Psoas muscle (tissue), 8 donors: ENCODE measurements at regions of chr5 and their contacts with region 1.

Region 1: DNA sequence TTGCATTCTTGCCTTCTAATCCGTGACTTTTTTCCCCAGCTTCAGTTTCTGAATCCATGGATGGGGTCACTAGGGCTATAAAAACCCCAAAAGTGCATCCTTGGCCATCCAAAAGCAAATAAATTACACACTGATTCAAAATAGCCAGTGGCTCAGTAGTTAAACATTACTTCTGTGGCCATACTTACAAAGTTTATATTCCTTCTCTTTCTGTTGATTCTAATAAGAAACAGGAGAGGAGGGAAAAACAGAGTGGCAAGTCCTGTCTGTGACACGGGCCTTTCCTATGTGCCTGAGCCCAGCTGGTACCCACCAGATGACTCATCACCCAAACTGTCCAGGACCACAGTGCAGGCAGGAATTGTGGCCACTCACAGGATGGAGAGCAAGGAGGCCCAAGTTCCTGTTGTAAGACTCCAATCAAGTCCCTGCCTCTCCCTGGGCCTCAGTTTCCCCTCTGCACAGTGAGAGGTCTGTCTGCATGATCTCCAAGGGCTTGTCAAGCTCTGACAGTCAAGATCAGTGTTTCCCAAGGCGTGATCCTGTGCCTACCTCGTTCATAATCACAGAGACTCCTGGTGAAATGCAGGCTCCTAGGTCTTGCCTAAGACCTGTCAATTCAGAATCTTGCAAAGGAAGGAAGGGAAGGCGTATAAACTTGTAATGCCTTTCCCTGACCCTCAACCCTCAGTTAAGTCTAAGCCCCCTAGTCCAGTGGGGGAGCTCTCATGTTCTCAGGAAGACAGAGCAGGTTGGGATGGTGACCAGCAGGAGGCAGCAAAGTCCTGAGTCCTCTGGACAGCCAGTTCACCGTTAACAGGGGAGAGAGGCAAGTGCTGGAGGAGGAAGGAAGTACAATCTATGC is 29.5 kb downstream of the TNIP1 start:
- DNase-seq: peak; percentile 82 to 91
- ATAC-seq: peak; percentile 88 to 91 (median 90)
- H3K4me3 ChIP-seq: no peak overlapping the region
- H3K27ac ChIP-seq: peak overlapping the region; percentile 63
- H3K4me1 ChIP-seq: peaks cover 16% of the 10 kb centered on the region
- H3K27me3 ChIP-seq: no peaks in the 10 kb centered on the region
- CTCF ChIP-seq: peak; percentile 88

Region 2: DNA sequence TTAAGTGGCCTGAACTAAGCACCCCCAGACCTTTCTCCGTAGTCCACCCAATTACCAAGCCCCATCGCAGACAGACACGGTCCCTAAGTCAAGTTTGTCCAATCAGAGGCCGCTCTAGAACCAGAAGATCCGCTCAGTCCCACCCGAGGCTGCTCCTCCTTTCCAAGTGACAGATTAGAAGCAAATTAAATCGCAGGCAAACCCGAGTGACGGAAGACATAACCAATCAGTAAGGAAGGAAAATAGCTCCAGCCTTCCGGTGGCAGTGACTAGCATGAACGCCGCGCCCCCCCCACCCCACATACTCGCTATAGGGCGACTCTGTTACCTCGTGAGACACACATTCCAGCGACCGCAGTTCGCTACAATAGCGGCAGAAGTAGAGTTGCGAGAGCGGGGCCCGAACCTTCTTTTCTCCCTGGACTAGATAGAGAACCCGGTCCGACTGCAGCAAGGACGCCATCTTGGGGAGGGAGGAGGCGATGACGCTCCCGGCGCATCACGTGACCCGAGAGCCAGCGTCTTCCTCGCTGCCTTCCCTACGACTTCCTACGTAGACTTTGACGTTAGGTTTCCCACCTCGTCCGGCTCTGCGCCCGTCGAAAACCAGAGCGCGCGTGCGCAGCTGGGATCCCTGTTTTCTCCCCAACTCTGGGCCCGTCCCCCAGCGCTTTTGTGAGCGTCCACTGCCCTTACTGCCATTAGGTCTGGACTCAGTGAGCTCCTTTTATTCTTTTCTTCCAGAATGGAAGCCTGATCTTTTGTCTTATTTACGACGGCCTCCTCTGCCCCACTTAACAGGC is 292.6 kb before region 1 on chr5 and contains the start of gene DCTN4:
- intact Hi-C with region 1: no loop called
- DNase-seq: peak; percentile 96 to 98
- ATAC-seq: peak; percentile 94 to 96 (median 94)
- H3K4me3 ChIP-seq: peak within 1 kb of the TSS; percentile 77
- H3K27ac ChIP-seq: peak within 1 kb of the TSS; percentile 94
- H3K4me1 ChIP-seq: peaks cover 15% of the 10 kb centered on the region
- H3K27me3 ChIP-seq: no peaks in the 10 kb centered on the region
- CTCF ChIP-seq: no peak
- total RNA-seq, gene DCTN4: 50.9 to 81.5 (median 70.6) TPM

Region 3: GRCh38 chr5:151002250-151002649 is 49.0 kb before region 1 on chr5:
- intact Hi-C with region 1: loop called (anchors 2 kb)
- DNase-seq: no peak
- ATAC-seq: peak in 3 of 4 donors; percentile 56 to 67 (median 61)
- H3K4me3 ChIP-seq: no peak overlapping the region
- H3K27ac ChIP-seq: no peak overlapping the region
- H3K4me1 ChIP-seq: peaks cover 25% of the 10 kb centered on the region
- H3K27me3 ChIP-seq: no peaks in the 10 kb centered on the region
- CTCF ChIP-seq: peak; percentile 64

Region 4: DNA sequence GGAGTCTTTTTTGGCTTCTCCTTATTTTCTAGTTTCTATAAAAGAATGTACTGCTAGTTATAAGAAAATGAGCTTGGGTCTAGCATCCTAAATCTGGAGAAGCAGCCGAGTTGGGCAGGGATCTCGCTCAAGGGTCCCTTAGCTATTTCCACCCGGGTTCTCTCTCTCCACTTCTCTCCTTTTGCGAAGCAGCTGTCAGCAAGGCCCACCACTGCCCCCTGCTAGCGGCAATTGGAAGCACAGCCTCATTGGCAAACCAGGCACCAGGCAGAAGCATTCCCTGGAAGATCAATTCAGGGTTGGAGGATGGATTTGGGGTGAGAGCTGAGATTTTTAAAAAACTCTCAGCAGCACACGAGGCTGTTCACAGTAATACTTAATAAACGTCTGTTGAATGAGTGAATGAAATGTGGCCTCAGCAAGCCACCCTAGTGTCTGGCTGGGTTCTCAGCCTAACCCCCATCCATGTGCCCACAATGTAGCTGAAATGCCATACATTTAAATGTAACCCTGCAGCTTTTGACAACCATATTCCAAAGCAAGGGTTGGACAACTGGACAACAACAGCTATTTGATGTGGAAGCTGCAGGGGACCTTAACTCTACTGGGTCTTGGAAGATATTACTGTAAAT is 64.1 kb after region 1 on chr5:
- intact Hi-C with region 1: loop called (anchors 1 to 2 kb)
- DNase-seq: peak; percentile 75 to 88
- ATAC-seq: peak; percentile 79 to 86 (median 82)
- H3K4me3 ChIP-seq: no peak overlapping the region
- H3K27ac ChIP-seq: peak overlapping the region; percentile 51
- H3K4me1 ChIP-seq: peaks cover 20% of the 10 kb centered on the region
- H3K27me3 ChIP-seq: no peaks in the 10 kb centered on the region
- CTCF ChIP-seq: peak; percentile 97

Region 5: DNA sequence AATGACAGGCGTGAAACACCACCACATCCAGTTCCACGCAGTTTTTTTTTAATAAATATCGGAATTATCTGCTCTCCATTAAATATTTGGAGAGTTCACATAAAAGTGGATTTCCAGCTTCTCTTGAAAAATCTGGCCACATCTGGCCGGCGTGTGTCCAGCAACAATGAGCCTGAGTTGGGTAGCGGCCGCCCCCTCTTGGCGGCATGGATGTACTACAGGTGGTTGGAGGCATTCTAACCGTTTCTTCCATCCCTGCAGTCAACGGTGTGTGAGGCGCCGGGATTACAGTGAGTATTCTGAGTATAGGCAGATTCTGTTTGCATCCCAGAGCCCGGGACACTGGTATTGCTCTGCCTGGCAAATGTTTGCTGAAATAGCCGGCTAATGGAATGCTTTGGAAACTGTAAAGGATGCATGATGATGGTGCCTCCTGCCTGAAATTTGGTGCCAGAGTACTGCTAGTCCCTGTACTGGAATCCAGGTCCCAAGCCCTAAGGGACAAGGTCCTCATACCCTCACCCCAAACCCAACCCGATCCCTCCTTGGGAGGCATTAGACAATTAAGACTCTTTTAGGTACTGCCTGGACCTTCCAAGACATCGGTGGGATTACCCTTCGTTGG is 188.1 kb after region 1 on chr5:
- intact Hi-C with region 1: loop called in 1 of 2 experiments (anchors 5 kb)
- DNase-seq: peak; percentile 82 to 90
- ATAC-seq: peak; percentile 75 to 81 (median 78)
- H3K4me3 ChIP-seq: peak overlapping the region; percentile 59
- H3K27ac ChIP-seq: peak overlapping the region; percentile 87
- H3K4me1 ChIP-seq: peaks cover 16% of the 10 kb centered on the region
- H3K27me3 ChIP-seq: no peaks in the 10 kb centered on the region
- CTCF ChIP-seq: peak; percentile 93